ENCODE measurements at regions of chr6 and their contacts with region 1.

Region 1: DNA sequence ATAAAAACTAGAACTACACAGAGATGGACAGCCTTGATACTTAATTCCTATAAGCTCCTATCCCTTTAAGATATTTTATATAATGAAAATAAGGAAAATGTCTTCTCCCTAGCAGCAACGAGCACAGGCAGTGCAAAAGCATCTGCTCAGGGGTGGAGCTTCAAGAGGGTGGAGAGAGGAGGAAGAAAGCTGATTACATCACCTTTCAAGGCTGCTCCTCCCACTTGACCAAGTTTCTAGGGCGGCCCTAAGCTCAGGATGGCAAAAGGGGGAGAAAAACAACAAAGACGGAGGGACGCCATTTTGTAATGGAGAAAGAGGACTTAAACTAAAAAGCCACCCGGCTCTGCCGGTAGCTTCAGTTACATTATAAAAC is 2.2 kb downstream of the PPP1R10 start:
- DNase-seq: peak; percentile 98
- H3K4me3 ChIP-seq: peak overlapping the region; percentile 54
- CTCF ChIP-seq: no peak

Region 2: GRCh38 chr6:30562470-30563425 is 52.1 kb before region 1 on chr6:
- in situ Hi-C with region 1: loop called (anchors 5 kb)
- DNase-seq: no peak
- H3K4me3 ChIP-seq: no peak overlapping the region
- CTCF ChIP-seq: no peak

Region 3: GRCh38 chr6:30647242-30648116 is 32.6 kb after region 1 on chr6:
- in situ Hi-C with region 1: no loop called
- DNase-seq: no peak
- H3K4me3 ChIP-seq: peak overlapping the region; percentile 95
- CTCF ChIP-seq: no peak

Measured in astrocyte of the cerebellum (primary cell).